A673 (cell line): ENCODE measurements at regions of chr17 and their contacts with region 1.

Region 1: GRCh38 chr17:67376737-67377487 is at the start of gene PITPNC1:
- DNase-seq: peak; percentile 95
- H3K4me3 ChIP-seq: peak within 1 kb of the TSS; percentile 96
- H3K27ac ChIP-seq: peak within 1 kb of the TSS; percentile 91
- H3K4me1 ChIP-seq: peaks cover 21% of the 10 kb centered on the region
- H3K27me3 ChIP-seq: no peaks in the 10 kb centered on the region
- CTCF ChIP-seq: no peak
- total RNA-seq, gene PITPNC1: 34.2 and 35.5 TPM in 2 replicates

Region 2: GRCh38 chr17:67293251-67294203 is 83.4 kb before region 1 on chr17:
- CTCF ChIA-PET with region 1: no interaction called
- POLR2A ChIA-PET with region 1: interaction called, 26 read pairs
- intact Hi-C with region 1: no loop called
- DNase-seq: peak; percentile 73
- H3K4me3 ChIP-seq: no peak overlapping the region
- H3K27ac ChIP-seq: no peak overlapping the region
- H3K4me1 ChIP-seq: peaks cover 6% of the 10 kb centered on the region
- H3K27me3 ChIP-seq: no peaks in the 10 kb centered on the region
- CTCF ChIP-seq: peak; percentile 85

Region 3: GRCh38 chr17:67336859-67337258 is 40.1 kb before region 1 on chr17:
- CTCF ChIA-PET with region 1: no interaction called
- POLR2A ChIA-PET with region 1: no interaction called
- intact Hi-C with region 1: no loop called
- DNase-seq: no peak
- H3K4me3 ChIP-seq: no peak overlapping the region
- H3K27ac ChIP-seq: no peak overlapping the region
- H3K4me1 ChIP-seq: peaks cover 17% of the 10 kb centered on the region
- H3K27me3 ChIP-seq: no peaks in the 10 kb centered on the region
- CTCF ChIP-seq: no peak

Region 4: GRCh38 chr17:67441052-67441927 is 64.4 kb after region 1 on chr17:
- CTCF ChIA-PET with region 1: interaction called, 20 read pairs
- POLR2A ChIA-PET with region 1: no interaction called
- intact Hi-C with region 1: loop called (anchors 2 kb)
- DNase-seq: peak; percentile 90
- H3K4me3 ChIP-seq: peak overlapping the region; percentile 39
- H3K27ac ChIP-seq: peak overlapping the region; percentile 90
- H3K4me1 ChIP-seq: peaks cover 55% of the 10 kb centered on the region
- H3K27me3 ChIP-seq: no peaks in the 10 kb centered on the region
- CTCF ChIP-seq: no peak

Region 5: DNA sequence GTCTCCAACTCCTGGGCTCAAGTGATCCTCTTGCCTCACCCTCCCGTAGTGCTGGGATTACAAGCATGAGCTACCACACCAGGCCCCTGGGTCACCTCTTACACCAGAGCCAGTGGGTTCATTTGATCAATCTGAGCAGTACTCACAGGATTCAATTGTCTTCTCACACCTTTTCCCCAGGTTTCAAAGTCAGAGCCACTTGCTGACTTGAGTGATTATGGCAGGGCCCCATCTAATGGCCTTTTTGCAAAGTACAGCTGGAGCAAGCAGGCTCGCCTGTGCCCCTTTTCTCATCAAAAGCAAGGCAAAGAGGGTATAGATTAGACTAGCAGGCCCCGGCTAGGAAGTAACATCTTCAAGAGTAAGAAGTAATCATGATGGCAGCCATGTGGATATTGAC is 226.0 kb after region 1 on chr17:
- CTCF ChIA-PET with region 1: interaction called, 5 read pairs
- POLR2A ChIA-PET with region 1: no interaction called
- intact Hi-C with region 1: loop called (anchors 5 kb)
- DNase-seq: peak; percentile 67
- H3K4me3 ChIP-seq: no peak overlapping the region
- H3K27ac ChIP-seq: no peak overlapping the region
- H3K4me1 ChIP-seq: peaks cover 19% of the 10 kb centered on the region
- H3K27me3 ChIP-seq: no peaks in the 10 kb centered on the region
- CTCF ChIP-seq: peak; percentile 68

Region 6: DNA sequence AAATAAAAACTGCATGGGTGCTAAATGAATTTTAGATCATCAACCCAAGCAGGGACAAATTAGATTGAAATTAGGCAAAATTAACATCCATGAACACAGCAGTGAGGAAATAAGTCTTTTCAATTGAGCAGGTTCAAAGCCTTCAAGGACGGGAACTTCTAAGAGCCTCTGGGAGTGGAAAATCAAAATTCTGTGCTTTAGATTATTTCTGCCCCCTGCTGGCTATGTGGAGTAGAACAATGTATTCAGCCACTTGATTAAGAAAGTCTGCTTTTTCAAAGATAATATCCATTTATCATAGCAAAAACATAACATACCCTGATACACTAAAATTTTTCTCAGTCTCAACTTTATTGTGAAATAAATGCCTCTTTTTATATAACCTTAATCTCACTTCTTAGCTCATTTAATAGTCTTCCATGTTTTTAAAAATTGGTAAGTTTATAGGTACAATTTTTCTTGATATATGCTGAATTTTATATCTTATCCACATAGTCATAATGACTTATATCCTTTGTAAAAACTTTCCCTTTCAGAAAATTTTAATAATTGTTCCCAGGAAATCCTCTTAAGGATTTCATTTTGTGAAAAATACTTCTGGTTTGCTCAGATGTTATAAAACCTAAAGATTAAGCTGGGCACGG is 312.7 kb after region 1 on chr17:
- CTCF ChIA-PET with region 1: interaction called, 7 read pairs
- POLR2A ChIA-PET with region 1: no interaction called
- intact Hi-C with region 1: loop called (anchors 2 kb)
- DNase-seq: peak; percentile 85
- H3K4me3 ChIP-seq: no peak overlapping the region
- H3K27ac ChIP-seq: no peak overlapping the region
- H3K4me1 ChIP-seq: peaks cover 24% of the 10 kb centered on the region
- H3K27me3 ChIP-seq: no peaks in the 10 kb centered on the region
- CTCF ChIP-seq: peak; percentile 82

Region 7: GRCh38 chr17:67829331-67829730 is 452.4 kb after region 1 on chr17:
- CTCF ChIA-PET with region 1: no interaction called
- POLR2A ChIA-PET with region 1: no interaction called
- intact Hi-C with region 1: no loop called
- DNase-seq: no peak
- H3K4me3 ChIP-seq: no peak overlapping the region
- H3K27ac ChIP-seq: no peak overlapping the region
- H3K4me1 ChIP-seq: peaks cover 26% of the 10 kb centered on the region
- H3K27me3 ChIP-seq: no peaks in the 10 kb centered on the region
- CTCF ChIP-seq: no peak